HEK293 (cell line): ENCODE measurements at regions of chr5 and their contacts with region 1.

Region 1: DNA sequence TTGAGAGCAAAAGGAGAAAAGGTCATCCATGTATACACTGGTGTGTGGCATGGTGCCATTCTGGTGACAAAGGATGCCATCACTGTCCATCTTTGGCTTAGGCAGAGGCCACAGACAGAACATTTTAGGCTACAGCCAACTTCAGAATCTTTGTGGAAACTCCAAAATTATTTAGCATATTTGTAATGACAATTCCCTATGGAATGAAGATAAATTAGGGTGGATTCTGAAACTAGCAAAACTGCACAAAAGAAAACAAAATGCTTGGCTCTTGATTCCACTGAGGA is 92.5 kb downstream of the FBXW11 start:
- H3K4me3 ChIP-seq: no peak overlapping the region
- H3K27ac ChIP-seq: no peak overlapping the region
- H3K4me1 ChIP-seq: no peaks in the 10 kb centered on the region
- CTCF ChIP-seq: no peak

Region 2: GRCh38 chr5:171893290-171893886 is 20.5 kb before region 1 on chr5:
- CTCF ChIA-PET with region 1: interaction called, 17 read pairs
- POLR2A ChIA-PET with region 1: no interaction called
- H3K4me3 ChIP-seq: no peak overlapping the region
- H3K27ac ChIP-seq: no peak overlapping the region
- H3K4me1 ChIP-seq: no peaks in the 10 kb centered on the region
- CTCF ChIP-seq: no peak

Region 3: DNA sequence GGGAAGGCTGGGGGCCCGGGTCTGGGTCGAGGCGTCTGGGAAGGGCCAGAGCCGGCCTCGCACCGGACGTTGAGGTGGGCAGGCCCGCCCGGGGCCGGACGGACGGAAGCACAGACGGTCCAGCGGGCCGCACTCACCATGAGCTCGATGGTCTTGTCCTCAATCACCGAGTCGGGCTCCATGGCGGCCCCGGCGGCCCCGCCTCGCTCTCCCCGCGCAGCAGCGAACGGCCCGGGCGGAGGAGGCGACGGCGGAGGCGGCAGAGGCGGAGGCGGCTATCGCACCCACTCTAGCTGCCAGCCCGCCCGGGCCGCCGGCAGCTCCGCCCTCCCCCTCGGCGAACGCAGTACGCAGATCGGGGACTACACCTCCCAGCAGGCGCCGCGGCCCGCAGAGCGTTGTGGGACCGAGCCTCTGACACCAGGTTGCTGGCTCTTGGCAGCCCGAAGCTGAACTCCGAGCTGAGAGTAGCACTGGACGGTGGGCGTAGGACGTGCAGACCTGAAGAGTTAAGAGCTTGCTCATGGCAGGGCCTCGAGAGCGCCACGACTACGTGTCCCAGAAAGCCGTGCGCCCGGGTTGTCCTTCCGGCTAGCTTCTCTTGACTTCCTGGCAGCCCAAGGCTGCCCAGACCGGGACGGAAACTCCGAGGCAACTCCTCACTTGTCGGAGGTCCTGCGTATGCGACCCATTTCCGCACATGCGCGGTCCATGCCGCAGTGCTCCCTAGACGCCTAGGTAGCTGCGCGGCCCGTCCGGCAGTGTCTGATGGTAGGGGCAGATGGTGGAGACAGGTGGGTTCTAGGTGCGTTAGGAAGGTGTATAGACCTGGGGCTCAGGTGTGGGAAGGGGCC is 92.6 kb after region 1 on chr5 and contains the start of gene FBXW11:
- CTCF ChIA-PET with region 1: interaction called, 31 read pairs
- POLR2A ChIA-PET with region 1: interaction called, 11 read pairs
- H3K4me3 ChIP-seq: peak within 1 kb of the TSS; percentile 90
- H3K27ac ChIP-seq: peak within 1 kb of the TSS; percentile 97
- H3K4me1 ChIP-seq: peaks cover 23% of the 10 kb centered on the region
- CTCF ChIP-seq: no peak

Region 4: GRCh38 chr5:172059661-172060100 is 145.8 kb after region 1 on chr5:
- CTCF ChIA-PET with region 1: interaction called, 65 read pairs
- POLR2A ChIA-PET with region 1: interaction called, 4 read pairs
- H3K4me3 ChIP-seq: no peak overlapping the region
- H3K27ac ChIP-seq: no peak overlapping the region
- H3K4me1 ChIP-seq: no peaks in the 10 kb centered on the region
- CTCF ChIP-seq: peak; percentile 72

Region 5: DNA sequence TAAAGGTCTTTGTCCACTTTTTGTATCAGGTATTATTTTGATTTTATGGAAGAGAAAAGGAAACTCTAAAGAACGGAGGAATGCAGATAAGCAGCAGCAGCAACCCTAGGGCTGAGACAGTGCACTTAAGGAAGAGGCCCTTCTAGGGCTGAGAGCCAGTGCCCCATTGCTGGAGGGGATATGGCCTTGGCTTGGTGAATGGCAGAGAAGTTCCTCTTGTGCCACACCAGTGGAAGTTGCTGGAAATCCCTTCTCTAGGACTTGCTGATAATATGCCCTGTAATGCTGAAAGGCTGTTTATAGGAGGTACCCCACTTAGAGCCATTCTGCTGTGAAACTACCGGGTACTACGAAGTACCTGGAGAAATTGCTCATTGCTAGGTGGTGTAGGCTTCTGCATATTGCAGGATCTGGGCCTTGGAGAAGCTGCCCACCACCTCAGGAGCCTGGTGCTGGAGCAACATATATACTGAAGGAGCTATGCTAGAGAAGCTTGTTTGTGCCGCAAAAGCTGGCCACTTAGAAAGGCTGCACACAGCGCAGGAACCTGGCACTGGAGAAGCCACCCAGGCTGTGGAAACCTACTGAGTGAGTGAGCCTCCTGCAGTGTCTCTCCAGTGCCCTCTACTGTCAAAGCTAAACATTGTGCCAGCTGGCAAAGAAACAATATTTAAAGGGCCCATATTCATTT is 379.3 kb after region 1 on chr5:
- CTCF ChIA-PET with region 1: interaction called, 14 read pairs
- POLR2A ChIA-PET with region 1: no interaction called
- H3K4me3 ChIP-seq: no peak overlapping the region
- H3K27ac ChIP-seq: no peak overlapping the region
- H3K4me1 ChIP-seq: peaks cover 4% of the 10 kb centered on the region; the same call in 1 of the 2 replicates
- CTCF ChIP-seq: peak; percentile 85